Ascending aorta (tissue), 2 donors: ENCODE measurements at regions of chr9 and their contacts with region 1.

Region 1: GRCh38 chr9:129884220-129885017 is 49.2 kb downstream of the USP20 start:
- DNase-seq: peak; percentile 80 to 95
- H3K4me3 ChIP-seq: peak overlapping the region; percentile 29 to 55
- H3K27ac ChIP-seq: peak overlapping the region; percentile 79 to 83
- H3K4me1 ChIP-seq: peaks cover 11 to 22% of the 10 kb centered on the region in 2 donors
- H3K27me3 ChIP-seq: no peaks in the 10 kb centered on the region
- CTCF ChIP-seq: no peak

Region 2: GRCh38 chr9:129835021-129835871 is 49.2 kb before region 1 on chr9 and contains the starts of genes C9orf78 and USP20:
- intact Hi-C with region 1: loop called (anchors 5 kb)
- DNase-seq: peak; percentile 67 to 97
- H3K4me3 ChIP-seq: peak within 1 kb of the TSS; percentile 93 to 100
- H3K27ac ChIP-seq: peak within 1 kb of the TSS; percentile 95 to 98
- H3K4me1 ChIP-seq: peaks cover 5 to 42% of the 10 kb centered on the region in 2 donors
- H3K27me3 ChIP-seq: no peaks in the 10 kb centered on the region
- CTCF ChIP-seq: no peak
- total RNA-seq, gene C9orf78: 19.2 TPM
- total RNA-seq, gene USP20: 34.0 TPM

Region 3: DNA sequence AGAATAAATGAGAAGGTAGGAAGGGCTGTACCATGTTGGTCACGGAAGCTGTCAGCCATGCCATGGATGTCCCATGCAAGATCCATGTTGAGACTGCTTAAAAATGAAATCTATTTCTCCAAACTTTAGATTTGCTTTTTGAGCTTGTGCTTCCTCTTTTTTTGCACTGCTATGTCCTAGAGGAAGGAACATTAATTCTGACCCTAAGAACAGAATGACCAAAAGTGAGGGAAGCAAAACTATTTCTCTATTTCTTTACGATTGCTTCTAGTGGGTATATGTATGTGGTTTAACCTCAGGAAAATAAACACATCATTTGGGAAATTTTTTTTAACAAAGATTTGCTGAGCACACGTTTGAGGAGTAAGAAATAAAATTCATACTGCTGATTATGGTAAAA is 35.4 kb after region 1 on chr9:
- intact Hi-C with region 1: no loop called
- DNase-seq: no peak
- H3K4me3 ChIP-seq: no peak overlapping the region
- H3K27ac ChIP-seq: no peak overlapping the region
- H3K4me1 ChIP-seq: no peaks in the 10 kb centered on the region
- H3K27me3 ChIP-seq: no peaks in the 10 kb centered on the region
- CTCF ChIP-seq: no peak

Region 4: GRCh38 chr9:129938291-129938979 is 54.0 kb after region 1 on chr9:
- intact Hi-C with region 1: loop called (anchors 5 kb)
- DNase-seq: no peak
- H3K4me3 ChIP-seq: no peak overlapping the region
- H3K27ac ChIP-seq: peak overlapping the region; percentile 70 to 84
- H3K4me1 ChIP-seq: peaks cover 8 to 46% of the 10 kb centered on the region in 2 donors
- H3K27me3 ChIP-seq: no peaks in the 10 kb centered on the region
- CTCF ChIP-seq: no peak

Region 5: DNA sequence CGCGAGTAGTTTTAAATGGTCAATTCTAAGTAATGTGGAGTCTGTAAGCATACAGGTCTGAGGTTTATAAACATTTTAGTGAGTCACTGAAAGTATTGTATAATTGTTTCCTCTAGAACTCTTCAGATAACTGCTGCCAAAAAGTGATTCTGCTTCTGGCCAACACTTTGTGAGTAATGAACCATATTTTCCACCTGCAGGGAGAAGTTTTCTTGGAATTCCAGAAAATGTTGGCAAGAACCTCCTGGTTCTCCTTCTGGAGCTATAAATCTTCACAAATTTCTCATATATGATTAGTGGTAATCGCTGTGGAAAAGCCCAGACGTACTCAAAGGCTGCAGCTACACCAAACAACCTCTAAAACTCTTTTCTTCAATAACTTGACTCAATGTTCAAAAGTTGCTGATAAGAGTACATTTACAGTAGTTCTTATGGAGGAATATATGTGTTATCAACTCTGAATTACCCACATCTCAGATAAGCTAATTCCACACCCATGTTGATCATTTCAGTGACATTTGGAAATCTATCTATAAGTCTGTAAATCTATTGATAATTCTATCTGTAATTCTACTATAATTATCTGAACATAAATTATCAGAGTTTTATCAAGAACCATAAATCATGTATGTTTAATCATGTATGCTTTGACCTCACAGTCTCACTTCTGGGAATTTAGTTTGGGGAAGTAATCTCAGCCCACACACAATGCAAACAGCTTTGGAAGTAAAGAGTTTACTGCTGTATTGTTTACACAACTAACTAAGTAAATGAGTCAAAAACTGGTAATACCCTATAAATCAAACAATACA is 84.5 kb after region 1 on chr9:
- intact Hi-C with region 1: loop called (anchors 2 kb)
- DNase-seq: peak in 1 of 2 donors; percentile 66
- H3K4me3 ChIP-seq: no peak overlapping the region
- H3K27ac ChIP-seq: peak overlapping the region; percentile 40 to 42
- H3K4me1 ChIP-seq: peaks cover 3 to 39% of the 10 kb centered on the region in 2 donors
- H3K27me3 ChIP-seq: no peaks in the 10 kb centered on the region
- CTCF ChIP-seq: no peak

Region 6: DNA sequence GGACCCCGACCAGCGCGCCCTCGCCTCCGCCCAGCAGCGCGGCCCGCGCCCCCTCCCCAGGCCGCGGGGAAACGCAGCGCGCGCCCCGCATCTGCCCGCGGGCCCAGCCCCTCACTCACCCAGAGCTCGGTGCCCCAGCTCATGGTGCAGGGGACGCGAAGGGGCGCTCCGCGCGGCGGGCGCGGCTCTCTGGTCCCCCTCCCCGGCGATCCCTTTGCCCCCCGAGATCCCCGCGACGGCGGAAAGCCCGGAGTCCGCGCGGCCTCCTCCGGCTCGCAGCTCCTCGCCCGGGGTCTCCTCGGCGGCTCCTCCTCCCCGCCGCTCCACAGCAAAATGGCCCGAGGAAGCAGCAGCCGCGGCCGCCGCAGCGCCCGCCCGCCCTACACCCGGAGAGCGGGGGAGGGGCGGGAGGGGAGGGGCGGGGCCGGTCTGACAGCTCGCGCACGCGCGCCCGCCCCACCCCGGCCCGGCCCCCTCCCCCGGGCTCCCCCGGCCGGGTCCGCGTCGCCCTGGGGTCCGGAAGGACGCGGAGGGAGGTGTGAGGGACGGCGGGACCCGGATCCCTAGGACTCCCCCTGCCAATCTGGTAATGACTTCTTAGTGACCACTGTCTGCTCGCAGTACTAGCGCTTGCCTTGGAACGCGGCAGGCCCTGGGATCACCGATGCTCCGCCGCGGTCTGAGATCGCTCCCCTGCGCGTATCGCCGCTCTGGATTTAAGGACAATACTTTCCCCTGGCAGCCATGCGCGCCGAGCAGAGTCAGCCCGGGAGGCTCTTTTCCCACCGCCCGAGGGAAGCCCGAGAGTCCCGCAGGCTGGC is 158.6 kb after region 1 on chr9 and contains the start of gene FNBP1:
- intact Hi-C with region 1: loop called (anchors 1 kb)
- DNase-seq: peak in 1 of 2 donors; percentile 88
- H3K4me3 ChIP-seq: peak within 1 kb of the TSS; percentile 86 to 94
- H3K27ac ChIP-seq: peak within 1 kb of the TSS; percentile 93 to 95
- H3K4me1 ChIP-seq: peaks cover 3 to 28% of the 10 kb centered on the region in 2 donors
- H3K27me3 ChIP-seq: no peaks in the 10 kb centered on the region
- CTCF ChIP-seq: peak in 1 of 3 experiments; percentile 5
- total RNA-seq, gene FNBP1: 87.2 TPM

Region 7: DNA sequence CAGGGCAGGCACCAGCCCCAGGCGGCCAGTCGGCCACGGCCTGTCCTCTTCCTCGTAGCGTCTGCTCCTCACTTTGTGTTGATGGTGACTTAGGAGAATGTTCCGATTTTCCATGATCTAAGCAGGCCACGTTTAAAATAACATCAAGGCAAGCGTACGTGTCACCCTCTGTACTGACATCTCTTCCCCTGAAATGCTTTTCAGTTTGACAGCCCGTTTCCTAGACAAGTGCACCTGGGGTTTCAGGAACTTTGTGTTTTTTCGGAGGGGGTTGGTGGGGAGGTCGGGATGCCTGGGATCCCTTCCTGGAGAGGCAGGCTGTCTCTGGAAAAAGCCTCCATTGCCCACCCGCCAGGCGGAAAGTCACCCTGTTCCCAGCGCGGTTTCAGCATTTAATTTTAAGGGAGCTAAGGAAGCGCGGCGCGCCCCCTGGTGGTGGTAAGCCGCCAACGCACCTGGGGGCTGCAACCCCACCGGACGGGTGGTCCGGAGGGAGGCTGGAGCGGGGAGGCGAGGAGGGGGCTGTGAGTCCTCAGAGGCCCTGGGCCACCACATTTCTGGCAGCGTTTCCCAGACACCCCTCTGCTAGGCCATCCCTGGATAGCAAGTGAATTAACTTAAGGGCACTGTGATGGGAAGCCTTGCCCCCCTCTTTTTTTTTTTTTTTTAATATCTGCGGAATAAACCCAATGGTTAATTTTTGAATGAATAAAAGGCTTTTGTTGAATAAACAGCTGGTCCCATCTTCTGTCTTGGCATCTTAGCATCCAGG is 351.7 kb after region 1 on chr9:
- intact Hi-C with region 1: loop called (anchors 5 kb)
- DNase-seq: peak in 1 of 2 donors; percentile 87
- H3K4me3 ChIP-seq: peak overlapping the region in 1 of 2 donors; percentile 50
- H3K27ac ChIP-seq: peak overlapping the region; percentile 36 to 48
- H3K4me1 ChIP-seq: peaks cover 3 to 7% of the 10 kb centered on the region in 2 donors
- H3K27me3 ChIP-seq: no peaks in the 10 kb centered on the region
- CTCF ChIP-seq: peak; percentile 98 to 100 (median 99)

Region 8: GRCh38 chr9:130320723-130321481 is 436.5 kb after region 1 on chr9:
- intact Hi-C with region 1: no loop called
- DNase-seq: no peak
- H3K4me3 ChIP-seq: no peak overlapping the region
- H3K27ac ChIP-seq: no peak overlapping the region
- H3K4me1 ChIP-seq: no peaks in the 10 kb centered on the region
- H3K27me3 ChIP-seq: peaks cover 8% of the 10 kb centered on the region
- CTCF ChIP-seq: no peak